ENCODE measurements at regions of chr12 and their contacts with region 1.

Region 1: DNA sequence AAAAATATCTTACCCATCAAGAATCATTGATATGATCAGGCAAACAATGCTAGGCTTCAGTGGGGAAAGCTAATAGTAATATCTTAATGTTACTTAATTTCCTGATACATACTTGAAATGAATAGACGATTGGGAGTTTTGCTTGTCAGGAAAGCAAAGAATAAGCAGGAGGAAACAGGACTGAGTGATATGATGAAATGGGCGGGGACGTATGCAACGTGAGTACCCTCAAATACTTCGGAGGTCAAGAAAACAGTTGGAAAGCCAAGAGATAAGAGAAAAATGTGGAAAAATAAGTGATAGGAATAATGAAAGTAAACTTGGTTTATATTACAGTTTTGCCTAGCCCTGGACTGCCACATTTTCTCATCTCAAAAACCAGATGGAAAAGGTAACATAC is 49.2 kb downstream of the METTL25 start:
- DNase-seq: peak; percentile 95
- H3K4me3 ChIP-seq: peak overlapping the region in 1 of 3 experiments; percentile 7
- H3K27ac ChIP-seq: peak overlapping the region; percentile 62
- H3K4me1 ChIP-seq: peaks cover 28% of the 10 kb centered on the region
- H3K27me3 ChIP-seq: no peaks in the 10 kb centered on the region
- CTCF ChIP-seq: no peak
- POLR2A ChIP-seq: no peak

Region 2: DNA sequence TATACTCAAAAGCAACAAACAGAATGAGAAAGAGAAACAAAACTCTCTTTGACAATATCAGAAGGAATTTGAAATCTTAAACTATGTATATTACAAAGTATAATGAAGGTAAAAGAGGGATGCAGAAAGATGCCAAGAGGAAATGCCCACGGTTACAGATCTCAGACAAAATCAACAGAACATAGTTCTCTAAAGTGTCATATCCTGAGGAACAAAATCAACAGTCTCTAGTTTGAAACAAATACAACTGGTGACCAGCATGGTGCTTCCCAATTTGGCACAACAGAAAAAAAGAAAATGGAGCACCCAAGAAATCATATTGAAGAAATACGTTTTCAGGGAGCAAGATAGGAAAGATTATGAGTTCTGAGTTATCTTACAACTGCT is 67.3 kb after region 1 on chr12:
- CTCF ChIA-PET with region 1: no interaction called
- POLR2A ChIA-PET with region 1: no interaction called
- dilution Hi-C with region 1: no loop called
- intact Hi-C with region 1: loop called (anchors 5 kb)
- DNase-seq: peak; percentile 76
- H3K4me3 ChIP-seq: peak overlapping the region in 1 of 3 experiments; percentile 29
- H3K27ac ChIP-seq: peak overlapping the region; percentile 90
- H3K4me1 ChIP-seq: peaks cover 26% of the 10 kb centered on the region
- H3K27me3 ChIP-seq: no peaks in the 10 kb centered on the region
- CTCF ChIP-seq: no peak
- POLR2A ChIP-seq: no peak

Measured in endothelial cell of umbilical vein (primary cell).